Caco-2 (cell line): ENCODE measurements at regions of chr21 and their contacts with region 1.

Region 1: GRCh38 chr21:17512253-17513213 is at the start of gene CXADR:
- DNase-seq: peak; percentile 95 to 97
- H3K4me3 ChIP-seq: peak within 1 kb of the TSS; percentile 92
- H3K4me3 Mint-ChIP-seq: peak within 1 kb of the TSS; percentile 87
- H3K27ac Mint-ChIP-seq: peak within 1 kb of the TSS; percentile 89
- H3K4me1 ChIP-seq: peaks cover 22% of the 10 kb centered on the region
- H3K4me1 Mint-ChIP-seq: peaks cover 38% of the 10 kb centered on the region
- H3K27me3 ChIP-seq: no peaks in the 10 kb centered on the region
- H3K27me3 Mint-ChIP-seq: no peaks in the 10 kb centered on the region
- CTCF ChIP-seq: peak; percentile 81 to 87
- total RNA-seq, gene CXADR: 98.6 and 102 TPM in 2 replicates

Region 2: GRCh38 chr21:17461014-17461413 is 51.5 kb before region 1 on chr21:
- CTCF ChIA-PET with region 1: no interaction called
- POLR2A ChIA-PET with region 1: no interaction called
- intact Hi-C with region 1: loop called (anchors 1 kb)
- DNase-seq: no peak
- H3K4me3 ChIP-seq: no peak overlapping the region
- H3K4me3 Mint-ChIP-seq: no peak overlapping the region
- H3K27ac Mint-ChIP-seq: no peak overlapping the region
- H3K4me1 ChIP-seq: peaks cover 19% of the 10 kb centered on the region
- H3K4me1 Mint-ChIP-seq: peaks cover 10% of the 10 kb centered on the region
- H3K27me3 ChIP-seq: no peaks in the 10 kb centered on the region
- H3K27me3 Mint-ChIP-seq: no peaks in the 10 kb centered on the region
- CTCF ChIP-seq: no peak

Region 3: GRCh38 chr21:17501107-17502006 is 11.2 kb before region 1 on chr21:
- CTCF ChIA-PET with region 1: interaction called, 8 read pairs
- POLR2A ChIA-PET with region 1: interaction called, 3 read pairs
- intact Hi-C with region 1: loop called (anchors 1 kb)
- DNase-seq: peak; percentile 80 to 84
- H3K4me3 ChIP-seq: no peak overlapping the region
- H3K4me3 Mint-ChIP-seq: peak overlapping the region; percentile 19
- H3K27ac Mint-ChIP-seq: peak overlapping the region; percentile 76
- H3K4me1 ChIP-seq: peaks cover 43% of the 10 kb centered on the region
- H3K4me1 Mint-ChIP-seq: peaks cover 42% of the 10 kb centered on the region
- H3K27me3 ChIP-seq: no peaks in the 10 kb centered on the region
- H3K27me3 Mint-ChIP-seq: no peaks in the 10 kb centered on the region
- CTCF ChIP-seq: no peak

Region 4: DNA sequence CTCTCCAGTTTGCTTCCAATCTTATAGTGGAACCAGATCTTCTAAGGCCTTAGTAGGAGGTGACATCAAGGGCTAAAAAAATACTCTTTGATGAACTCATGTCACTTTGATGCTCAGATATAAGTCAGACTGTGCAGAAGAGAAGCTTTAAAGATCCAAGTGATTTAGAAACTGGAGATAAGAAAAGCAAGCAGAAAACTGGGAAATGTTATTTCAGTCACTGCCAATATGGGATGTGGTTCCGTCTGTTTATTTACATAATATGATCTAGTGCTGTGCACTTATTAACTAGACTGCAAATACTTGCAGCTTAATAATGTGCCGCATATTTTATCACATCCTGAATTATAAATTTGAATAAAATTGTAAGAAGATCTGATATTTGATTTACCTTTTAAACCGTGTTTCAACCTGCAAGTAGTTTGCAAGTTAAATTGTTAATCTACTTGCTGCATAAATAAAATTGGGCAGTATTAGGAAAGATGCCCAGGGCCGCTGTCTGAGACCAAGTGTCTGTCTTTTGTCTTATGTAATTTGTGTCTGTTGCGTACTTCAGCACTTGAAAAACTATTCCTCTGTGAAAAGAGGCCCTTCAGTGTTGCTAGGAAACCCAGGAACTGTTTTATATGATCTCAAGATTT is 30.0 kb after region 1 on chr21:
- CTCF ChIA-PET with region 1: no interaction called
- POLR2A ChIA-PET with region 1: interaction called, 13 read pairs
- intact Hi-C with region 1: loop called (anchors 1 kb)
- DNase-seq: peak in 1 of 2 experiments; percentile 57
- H3K4me3 ChIP-seq: no peak overlapping the region
- H3K4me3 Mint-ChIP-seq: peak overlapping the region; percentile 54
- H3K27ac Mint-ChIP-seq: no peak overlapping the region
- H3K4me1 ChIP-seq: peaks cover 54% of the 10 kb centered on the region
- H3K4me1 Mint-ChIP-seq: peaks cover 71% of the 10 kb centered on the region
- H3K27me3 ChIP-seq: no peaks in the 10 kb centered on the region
- H3K27me3 Mint-ChIP-seq: no peaks in the 10 kb centered on the region
- CTCF ChIP-seq: no peak

Region 5: GRCh38 chr21:17585875-17586450 is 73.4 kb after region 1 on chr21:
- CTCF ChIA-PET with region 1: interaction called, 4 read pairs
- POLR2A ChIA-PET with region 1: no interaction called
- intact Hi-C with region 1: loop called (anchors 2 kb)
- DNase-seq: peak in 1 of 2 experiments; percentile 39
- H3K4me3 ChIP-seq: no peak overlapping the region
- H3K4me3 Mint-ChIP-seq: no peak overlapping the region
- H3K27ac Mint-ChIP-seq: no peak overlapping the region
- H3K4me1 ChIP-seq: peaks cover 8% of the 10 kb centered on the region
- H3K4me1 Mint-ChIP-seq: peaks cover 12% of the 10 kb centered on the region
- H3K27me3 ChIP-seq: no peaks in the 10 kb centered on the region
- H3K27me3 Mint-ChIP-seq: no peaks in the 10 kb centered on the region
- CTCF ChIP-seq: peak; percentile 40 to 57